BJ (cell line): ENCODE measurements at regions of chr3 and their contacts with region 1.

Region 1: GRCh38 chr3:38346587-38347410 is at the start of gene XYLB:
- DNase-seq: no peak
- H3K4me3 ChIP-seq: peak within 1 kb of the TSS; percentile 74
- H3K27me3 ChIP-seq: no peaks in the 10 kb centered on the region
- CTCF ChIP-seq: peak; percentile 77
- polyA plus RNA-seq, gene XYLB: 3.0 and 3.2 TPM in 2 replicates

Region 2: DNA sequence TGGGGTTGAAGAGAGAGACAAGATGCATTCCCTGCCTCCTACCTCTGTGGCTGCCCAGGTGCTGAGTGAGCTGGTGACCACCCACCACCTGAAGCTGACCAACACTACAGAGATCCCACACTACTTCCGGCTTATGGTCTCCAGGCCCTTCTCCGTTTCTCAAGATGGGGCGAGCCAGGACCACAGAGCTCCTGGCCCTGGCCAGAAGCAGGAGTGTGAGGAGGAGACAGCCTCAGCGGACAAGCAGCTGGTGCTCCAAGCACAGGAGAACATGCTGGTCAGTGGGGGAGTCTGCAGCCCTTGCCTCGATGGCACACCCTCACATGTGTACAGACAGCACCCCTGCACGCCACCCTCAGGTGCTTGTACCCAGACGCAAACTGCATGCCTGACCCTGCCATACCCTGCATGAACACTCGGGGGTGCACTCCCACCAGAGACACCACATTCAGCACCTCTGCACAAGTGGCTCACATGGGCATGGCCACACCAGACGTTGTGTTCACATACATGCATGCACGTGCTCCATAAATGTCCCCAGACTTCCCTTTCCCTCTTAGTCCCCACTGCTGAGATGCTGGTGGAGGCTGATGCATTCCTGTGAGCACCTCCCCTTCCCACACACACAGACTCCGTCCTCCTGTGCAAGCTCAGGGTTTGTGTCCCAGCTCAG is 228.9 kb before region 1 on chr3:
- CTCF ChIA-PET with region 1: interaction called, 18 read pairs
- POLR2A ChIA-PET with region 1: no interaction called
- DNase-seq: no peak
- H3K4me3 ChIP-seq: no peak overlapping the region
- H3K27me3 ChIP-seq: no peaks in the 10 kb centered on the region
- CTCF ChIP-seq: peak; percentile 83

Region 3: GRCh38 chr3:38334142-38335055 is 12.4 kb before region 1 on chr3:
- CTCF ChIA-PET with region 1: interaction called, 34 read pairs
- POLR2A ChIA-PET with region 1: no interaction called
- DNase-seq: no peak
- H3K4me3 ChIP-seq: no peak overlapping the region
- H3K27me3 ChIP-seq: no peaks in the 10 kb centered on the region; the same call in 1 of the 2 replicates
- CTCF ChIP-seq: no peak

Region 4: DNA sequence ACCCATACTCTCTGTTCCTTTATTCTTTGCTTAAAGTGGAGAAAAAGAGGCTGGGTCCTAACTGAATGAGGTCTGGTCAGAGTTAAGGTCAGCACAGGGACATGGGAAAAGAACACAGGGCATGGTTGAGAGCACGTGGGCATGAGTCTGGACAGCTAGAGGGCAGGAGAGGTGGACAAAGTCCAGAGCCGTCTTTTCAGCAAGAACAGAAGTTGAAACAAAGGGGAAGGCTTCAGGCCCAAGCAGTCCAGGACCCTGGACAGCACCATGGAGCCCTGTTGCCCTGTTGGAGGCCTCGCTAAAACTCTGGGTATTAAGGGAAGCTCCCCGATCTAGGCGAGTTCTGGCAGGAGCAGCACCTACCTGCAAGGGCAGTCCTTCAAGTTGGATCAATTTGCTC is 50.5 kb after region 1 on chr3:
- CTCF ChIA-PET with region 1: interaction called, 10 read pairs
- POLR2A ChIA-PET with region 1: no interaction called
- DNase-seq: no peak
- H3K4me3 ChIP-seq: no peak overlapping the region
- H3K27me3 ChIP-seq: no peaks in the 10 kb centered on the region
- CTCF ChIP-seq: no peak

Region 5: GRCh38 chr3:38479431-38480092 is 132.8 kb after region 1 on chr3:
- CTCF ChIA-PET with region 1: interaction called, 112 read pairs
- POLR2A ChIA-PET with region 1: no interaction called
- DNase-seq: no peak
- H3K4me3 ChIP-seq: no peak overlapping the region
- H3K27me3 ChIP-seq: no peaks in the 10 kb centered on the region
- CTCF ChIP-seq: peak; percentile 90